K562 (cell line): ENCODE measurements at regions of chr18 and their contacts with region 1.

Region 1: GRCh38 chr18:58781627-58782194 is 83.0 kb upstream of the ZNF532 start:
- DNase-seq: peak; percentile 43 to 59 (median 48)
- ATAC-seq: peak; percentile 94
- H3K4me3 ChIP-seq: no peak overlapping the region
- H3K27ac ChIP-seq: no peak overlapping the region
- H3K4me1 ChIP-seq: no peaks in the 10 kb centered on the region
- H3K27me3 ChIP-seq: no peaks in the 10 kb centered on the region; a peak in 2 of 5 replicates
- CTCF ChIP-seq: peak; percentile 51 to 74 (median 63)
- EP300 ChIP-seq: no peak
- POLR2A ChIP-seq: no peak
- RAD21 ChIP-seq: peak; percentile 67 to 86

Region 2: GRCh38 chr18:58682429-58683069 is 99.2 kb before region 1 on chr18:
- CTCF ChIA-PET with region 1: no interaction called
- POLR2A ChIA-PET with region 1: no interaction called
- in situ Hi-C with region 1: no loop called
- intact Hi-C with region 1: no loop called
- DNase-seq: no peak
- ATAC-seq: no peak
- H3K4me3 ChIP-seq: no peak overlapping the region
- H3K27ac ChIP-seq: no peak overlapping the region
- H3K4me1 ChIP-seq: no peaks in the 10 kb centered on the region
- H3K27me3 ChIP-seq: no peaks in the 10 kb centered on the region
- CTCF ChIP-seq: no peak
- EP300 ChIP-seq: no peak
- POLR2A ChIP-seq: no peak
- RAD21 ChIP-seq: no peak

Region 3: GRCh38 chr18:58699551-58699950 is 82.2 kb before region 1 on chr18:
- CTCF ChIA-PET with region 1: no interaction called
- POLR2A ChIA-PET with region 1: no interaction called
- in situ Hi-C with region 1: no loop called
- intact Hi-C with region 1: no loop called
- DNase-seq: peak in 2 of 4 experiments; percentile 6
- ATAC-seq: no peak
- H3K4me3 ChIP-seq: no peak overlapping the region
- H3K27ac ChIP-seq: no peak overlapping the region
- H3K4me1 ChIP-seq: peaks cover 0 to 1% of the 10 kb centered on the region in 2 experiments; a peak in 2 of 5 replicates
- H3K27me3 ChIP-seq: no peaks in the 10 kb centered on the region
- CTCF ChIP-seq: no peak
- EP300 ChIP-seq: no peak
- POLR2A ChIP-seq: no peak
- RAD21 ChIP-seq: no peak

Region 4: GRCh38 chr18:59056706-59057492 is 275.2 kb after region 1 on chr18:
- CTCF ChIA-PET with region 1: interaction called, 13 read pairs
- POLR2A ChIA-PET with region 1: no interaction called
- in situ Hi-C with region 1: loop called (anchors 5 kb)
- intact Hi-C with region 1: loop called (anchors 1 kb)
- DNase-seq: peak; percentile 11 to 50 (median 31)
- ATAC-seq: peak; percentile 78
- H3K4me3 ChIP-seq: no peak overlapping the region
- H3K27ac ChIP-seq: no peak overlapping the region
- H3K4me1 ChIP-seq: no peaks in the 10 kb centered on the region
- H3K27me3 ChIP-seq: peaks cover 0 to 15% of the 10 kb centered on the region in 2 experiments; a peak in 2 of 5 replicates
- CTCF ChIP-seq: peak; percentile 51 to 71 (median 65)
- EP300 ChIP-seq: no peak
- POLR2A ChIP-seq: no peak
- RAD21 ChIP-seq: peak; percentile 57 to 71